ENCODE measurements at regions of chr1 and their contacts with region 1.

Region 1: GRCh38 chr1:201916649-201917249 is 28.1 kb downstream of the SHISA4 start:
- DNase-seq: peak; percentile 69 to 97
- H3K4me3 ChIP-seq: peak overlapping the region; percentile 30 to 50
- H3K27ac ChIP-seq: peak overlapping the region; percentile 94 to 97
- H3K4me1 ChIP-seq: peaks cover 71 to 94% of the 10 kb centered on the region in 2 donors
- H3K27me3 ChIP-seq: no peaks in the 10 kb centered on the region
- CTCF ChIP-seq: no peak

Region 2: GRCh38 chr1:201905234-201905890 is 11.4 kb before region 1 on chr1:
- intact Hi-C with region 1: loop called (anchors 1 kb)
- DNase-seq: no peak
- H3K4me3 ChIP-seq: peak overlapping the region; percentile 8 to 28
- H3K27ac ChIP-seq: peak overlapping the region; percentile 94 to 97
- H3K4me1 ChIP-seq: peaks cover 68 to 93% of the 10 kb centered on the region in 2 donors
- H3K27me3 ChIP-seq: no peaks in the 10 kb centered on the region
- CTCF ChIP-seq: no peak

Region 3: DNA sequence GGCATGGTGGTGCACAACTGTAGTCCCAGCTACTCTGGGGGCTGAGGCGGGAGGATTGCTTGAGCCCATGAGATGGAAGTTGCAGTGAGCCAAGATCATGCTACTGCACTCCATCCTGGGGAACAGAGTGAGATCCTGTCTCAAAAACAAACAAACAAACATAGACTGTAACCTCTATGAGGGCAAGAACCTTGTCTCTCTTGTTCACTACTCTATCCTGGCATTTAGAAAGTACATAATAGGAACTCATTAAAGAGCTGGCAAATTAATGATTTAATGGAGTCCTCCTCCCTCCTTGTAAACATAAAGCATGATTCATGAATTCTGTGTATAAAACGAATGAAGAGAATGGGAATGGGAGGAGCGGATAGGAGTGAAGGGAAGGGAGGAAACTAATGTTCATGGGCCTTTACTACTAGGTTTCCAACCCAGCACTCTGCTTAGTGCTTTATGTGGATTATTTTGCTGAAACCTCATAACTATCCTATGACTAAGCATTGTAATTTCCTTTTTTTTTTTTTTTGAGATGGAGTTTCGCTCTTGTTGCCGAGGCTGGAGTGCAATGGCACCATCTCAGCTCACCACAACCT is 21.0 kb after region 1 on chr1:
- intact Hi-C with region 1: loop called (anchors 2 kb)
- DNase-seq: no peak
- H3K4me3 ChIP-seq: peak overlapping the region; percentile 26 to 91
- H3K27ac ChIP-seq: peak overlapping the region; percentile 81 to 87
- H3K4me1 ChIP-seq: peaks cover 24 to 44% of the 10 kb centered on the region in 2 donors
- H3K27me3 ChIP-seq: no peaks in the 10 kb centered on the region
- CTCF ChIP-seq: no peak

Region 4: GRCh38 chr1:201946224-201946908 is 29.6 kb after region 1 on chr1 and contains the start of gene LMOD1:
- intact Hi-C with region 1: loop called (anchors 2 kb)
- DNase-seq: peak; percentile 89 to 99
- H3K4me3 ChIP-seq: peak within 1 kb of the TSS; percentile 72 to 91
- H3K27ac ChIP-seq: peak within 1 kb of the TSS; percentile 93 to 97
- H3K4me1 ChIP-seq: peaks cover 3 to 23% of the 10 kb centered on the region in 2 donors
- H3K27me3 ChIP-seq: no peaks in the 10 kb centered on the region
- CTCF ChIP-seq: no peak
- total RNA-seq, gene LMOD1: 316 TPM